Kidney (tissue), 22 donors: ENCODE measurements at regions of chr9 and their contacts with region 1.

Region 1: GRCh38 chr9:89588006-89588879 is 16.6 kb upstream of the GADD45G start:
- DNase-seq: no peak
- H3K4me3 ChIP-seq: no peak overlapping the region
- H3K27ac ChIP-seq: no peak overlapping the region
- H3K4me1 ChIP-seq: peaks cover 0 to under 1% (median 0%) of the 10 kb centered on the region in 3 donors
- H3K27me3 ChIP-seq: no peaks in the 10 kb centered on the region
- CTCF ChIP-seq: no peak

Region 2: GRCh38 chr9:89295400-89295799 is 292.8 kb before region 1 on chr9:
- intact Hi-C with region 1: no loop called
- DNase-seq: no peak
- H3K4me3 ChIP-seq: no peak overlapping the region
- H3K27ac ChIP-seq: no peak overlapping the region
- H3K4me1 ChIP-seq: no peaks in the 10 kb centered on the region
- H3K27me3 ChIP-seq: no peaks in the 10 kb centered on the region
- CTCF ChIP-seq: no peak

Region 3: DNA sequence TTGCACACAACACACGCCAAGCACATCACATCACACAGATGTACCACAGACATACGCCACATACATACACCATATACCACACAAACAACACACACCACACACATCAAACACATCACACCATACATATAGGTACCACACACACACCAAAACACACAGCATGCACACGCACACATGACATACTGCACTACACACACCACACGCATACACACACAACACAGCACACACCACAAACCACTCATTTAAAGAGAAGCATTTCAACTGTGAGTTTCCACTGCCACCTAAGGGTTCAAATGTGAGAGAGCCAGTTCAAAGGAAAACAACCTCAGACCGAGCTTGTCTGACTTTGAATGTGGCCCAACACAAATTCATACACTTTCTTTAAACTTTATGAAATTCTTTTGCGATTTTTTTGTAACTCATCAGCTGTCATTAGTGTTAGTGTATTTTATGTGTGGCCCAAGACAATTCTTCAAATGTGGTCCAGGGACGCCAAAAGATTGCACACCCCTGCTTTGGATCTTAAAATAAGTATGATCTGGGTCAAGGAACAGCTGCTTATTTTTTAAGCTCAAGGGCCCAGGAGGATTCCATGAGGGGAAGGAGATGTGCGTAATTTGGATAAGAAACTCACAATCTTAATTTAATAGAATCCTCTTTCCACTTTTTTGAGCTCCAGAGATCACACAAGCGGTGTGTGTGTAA is 511.2 kb after region 1 on chr9:
- intact Hi-C with region 1: loop called (anchors 5 kb)
- DNase-seq: peak in 2 of 5 donors; percentile 37 to 72
- H3K4me3 ChIP-seq: no peak overlapping the region
- H3K27ac ChIP-seq: no peak overlapping the region
- H3K4me1 ChIP-seq: peaks cover 0 to 5% (median 5%) of the 10 kb centered on the region in 3 donors
- H3K27me3 ChIP-seq: no peaks in the 10 kb centered on the region
- CTCF ChIP-seq: peak; percentile 51